ENCODE measurements at regions of chr9 and their contacts with region 1.

Region 1: GRCh38 chr9:81689343-81690190 is at the start of gene TLE1:
- DNase-seq: peak; percentile 100
- H3K4me3 Mint-ChIP-seq: no peak within 1 kb of the TSS
- H3K27ac Mint-ChIP-seq: peak within 1 kb of the TSS; percentile 82
- H3K4me1 Mint-ChIP-seq: peaks cover 8% of the 10 kb centered on the region
- H3K27me3 Mint-ChIP-seq: no peaks in the 10 kb centered on the region
- CTCF ChIP-seq: no peak
- total RNA-seq, gene TLE1: 21.9 and 26.8 TPM in 2 replicates

Region 2: DNA sequence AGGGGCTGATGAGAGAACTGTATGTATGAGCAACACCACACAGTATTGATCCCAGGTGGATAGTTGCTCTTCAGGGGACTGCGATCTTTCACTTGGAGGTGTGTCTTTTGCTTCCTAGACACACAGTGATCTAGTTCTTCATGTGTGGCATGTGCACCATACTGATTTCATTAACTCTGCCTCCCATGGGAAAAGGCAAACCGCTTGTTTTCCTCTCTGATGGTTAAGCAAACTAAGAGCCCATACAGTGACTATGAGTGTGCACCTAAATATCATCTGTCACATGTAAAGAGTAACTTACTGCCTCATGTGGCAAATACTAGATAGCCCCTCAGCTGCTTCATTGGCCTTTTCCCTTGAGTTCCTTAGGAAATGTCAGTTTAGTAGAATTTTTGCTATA is 1970.5 kb before region 1 on chr9:
- CTCF ChIA-PET with region 1: no interaction called
- POLR2A ChIA-PET with region 1: no interaction called
- intact Hi-C with region 1: no loop called
- DNase-seq: no peak
- H3K4me3 Mint-ChIP-seq: no peak overlapping the region
- H3K27ac Mint-ChIP-seq: no peak overlapping the region
- H3K4me1 Mint-ChIP-seq: no peaks in the 10 kb centered on the region
- H3K27me3 Mint-ChIP-seq: no peaks in the 10 kb centered on the region
- CTCF ChIP-seq: no peak

Region 3: DNA sequence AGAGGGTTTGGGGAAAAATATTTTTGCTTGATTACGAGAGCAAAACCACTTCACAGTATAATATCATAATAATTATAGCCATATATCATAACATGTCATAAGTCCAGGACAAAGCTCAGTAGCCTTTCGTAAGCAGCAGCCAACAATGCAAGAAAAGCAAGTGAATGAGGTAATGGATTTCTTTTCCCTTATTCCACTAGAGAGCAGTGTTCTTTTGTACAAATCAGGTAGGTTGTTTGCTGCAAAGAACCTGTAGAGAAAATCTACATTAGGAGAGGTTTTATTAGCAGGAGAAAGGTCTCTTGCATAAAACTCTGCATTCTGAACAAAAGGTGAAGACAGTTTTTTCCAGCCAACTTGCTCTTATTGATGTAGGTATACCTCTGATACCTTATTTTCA is 1084.4 kb before region 1 on chr9:
- CTCF ChIA-PET with region 1: interaction called, 4 read pairs
- POLR2A ChIA-PET with region 1: no interaction called
- intact Hi-C with region 1: loop called (anchors 2 kb)
- DNase-seq: peak; percentile 54
- H3K4me3 Mint-ChIP-seq: no peak overlapping the region
- H3K27ac Mint-ChIP-seq: no peak overlapping the region
- H3K4me1 Mint-ChIP-seq: no peaks in the 10 kb centered on the region
- H3K27me3 Mint-ChIP-seq: no peaks in the 10 kb centered on the region
- CTCF ChIP-seq: peak; percentile 32

Region 4: GRCh38 chr9:81103597-81104471 is 585.7 kb before region 1 on chr9:
- CTCF ChIA-PET with region 1: no interaction called
- POLR2A ChIA-PET with region 1: no interaction called
- intact Hi-C with region 1: loop called (anchors 10 kb)
- DNase-seq: peak; percentile 22
- H3K4me3 Mint-ChIP-seq: no peak overlapping the region
- H3K27ac Mint-ChIP-seq: no peak overlapping the region
- H3K4me1 Mint-ChIP-seq: peaks cover 7% of the 10 kb centered on the region
- H3K27me3 Mint-ChIP-seq: no peaks in the 10 kb centered on the region
- CTCF ChIP-seq: peak; percentile 34

Region 5: GRCh38 chr9:81529556-81530195 is 159.9 kb before region 1 on chr9:
- CTCF ChIA-PET with region 1: interaction called, 12 read pairs
- POLR2A ChIA-PET with region 1: no interaction called
- intact Hi-C with region 1: no loop called
- DNase-seq: peak; percentile 84
- H3K4me3 Mint-ChIP-seq: no peak overlapping the region
- H3K27ac Mint-ChIP-seq: peak overlapping the region; percentile 53
- H3K4me1 Mint-ChIP-seq: peaks cover 26% of the 10 kb centered on the region
- H3K27me3 Mint-ChIP-seq: no peaks in the 10 kb centered on the region
- CTCF ChIP-seq: no peak

Region 6: DNA sequence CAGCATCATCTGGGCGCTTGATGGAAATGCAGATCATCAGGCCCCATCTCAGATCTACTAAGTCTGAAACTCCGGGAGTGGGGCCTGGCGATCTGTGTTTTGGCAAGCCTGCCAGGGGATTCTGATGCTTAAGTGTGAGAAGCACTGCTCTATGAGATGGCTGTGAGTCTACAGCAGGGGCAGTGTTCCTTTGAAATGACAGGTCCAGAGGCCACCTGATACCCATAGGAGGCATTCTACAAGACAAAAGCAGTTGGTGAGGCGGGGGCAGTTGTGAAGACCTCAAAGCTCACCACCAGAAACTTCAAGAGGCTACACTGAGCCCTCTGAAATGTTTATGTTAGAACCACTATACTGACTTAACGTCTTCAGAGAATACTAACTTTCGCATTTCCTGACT is 151.8 kb after region 1 on chr9:
- CTCF ChIA-PET with region 1: interaction called, 3 read pairs
- POLR2A ChIA-PET with region 1: interaction called, 13 read pairs
- intact Hi-C with region 1: loop called (anchors 2 kb)
- DNase-seq: no peak
- H3K4me3 Mint-ChIP-seq: no peak overlapping the region
- H3K27ac Mint-ChIP-seq: no peak overlapping the region
- H3K4me1 Mint-ChIP-seq: peaks cover 4% of the 10 kb centered on the region
- H3K27me3 Mint-ChIP-seq: no peaks in the 10 kb centered on the region
- CTCF ChIP-seq: no peak

Region 7: GRCh38 chr9:82606492-82607382 is 917.2 kb after region 1 on chr9:
- CTCF ChIA-PET with region 1: interaction called, 3 read pairs
- POLR2A ChIA-PET with region 1: interaction called, 3 read pairs
- intact Hi-C with region 1: loop called (anchors 2 kb)
- DNase-seq: peak; percentile 73
- H3K4me3 Mint-ChIP-seq: no peak overlapping the region
- H3K27ac Mint-ChIP-seq: no peak overlapping the region
- H3K4me1 Mint-ChIP-seq: no peaks in the 10 kb centered on the region
- H3K27me3 Mint-ChIP-seq: no peaks in the 10 kb centered on the region
- CTCF ChIP-seq: peak; percentile 57